Panc1 (cell line): ENCODE measurements at regions of chr7 and their contacts with region 1.

Region 1: GRCh38 chr7:55898287-55898686 is 11.0 kb downstream of the ZNF713 start:
- DNase-seq: no peak
- ATAC-seq: no peak
- H3K4me3 ChIP-seq: no peak overlapping the region
- H3K27ac ChIP-seq: no peak overlapping the region
- H3K4me1 ChIP-seq: no peaks in the 10 kb centered on the region
- H3K27me3 ChIP-seq: no peaks in the 10 kb centered on the region
- CTCF ChIP-seq: no peak

Region 2: GRCh38 chr7:55641273-55641691 is 257.0 kb before region 1 on chr7:
- CTCF ChIA-PET with region 1: no interaction called
- POLR2A ChIA-PET with region 1: no interaction called
- in situ Hi-C with region 1: no loop called
- intact Hi-C with region 1: no loop called
- DNase-seq: peak; percentile 72
- ATAC-seq: peak; percentile 98
- H3K4me3 ChIP-seq: no peak overlapping the region
- H3K27ac ChIP-seq: no peak overlapping the region
- H3K4me1 ChIP-seq: no peaks in the 10 kb centered on the region
- H3K27me3 ChIP-seq: no peaks in the 10 kb centered on the region; the same call in 1 of the 2 replicates
- CTCF ChIP-seq: peak; percentile 85

Region 3: DNA sequence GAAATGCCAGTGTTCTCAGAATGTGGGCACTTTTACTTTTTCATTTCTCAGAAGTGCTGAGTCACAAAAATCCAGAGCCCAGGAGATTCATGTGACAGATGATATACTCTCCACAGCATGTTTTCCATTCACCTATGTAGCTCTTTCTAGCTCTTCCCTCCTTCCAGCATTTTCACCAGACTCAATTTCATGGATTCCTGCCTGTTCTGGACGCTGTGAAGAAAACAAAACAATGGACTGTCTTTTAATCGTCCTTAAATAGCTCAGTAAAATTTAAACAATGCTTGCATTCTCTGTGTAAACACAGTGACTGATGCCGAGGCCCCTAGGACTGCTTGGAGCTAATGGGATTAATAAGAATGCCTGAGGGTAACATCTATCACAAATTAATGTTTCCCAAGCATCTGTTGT is 14.5 kb after region 1 on chr7:
- CTCF ChIA-PET with region 1: no interaction called
- POLR2A ChIA-PET with region 1: interaction called, 14 read pairs
- in situ Hi-C with region 1: no loop called
- intact Hi-C with region 1: no loop called
- DNase-seq: no peak
- ATAC-seq: no peak; the same call in 1 of the 2 replicates
- H3K4me3 ChIP-seq: no peak overlapping the region
- H3K27ac ChIP-seq: no peak overlapping the region
- H3K4me1 ChIP-seq: no peaks in the 10 kb centered on the region
- H3K27me3 ChIP-seq: no peaks in the 10 kb centered on the region
- CTCF ChIP-seq: no peak

Region 4: GRCh38 chr7:57274535-57275283 is 1376.4 kb after region 1 on chr7:
- CTCF ChIA-PET with region 1: no interaction called
- POLR2A ChIA-PET with region 1: no interaction called
- in situ Hi-C with region 1: no loop called
- intact Hi-C with region 1: no loop called
- DNase-seq: no peak
- ATAC-seq: no peak
- H3K4me3 ChIP-seq: no peak overlapping the region
- H3K27ac ChIP-seq: no peak overlapping the region
- H3K4me1 ChIP-seq: no peaks in the 10 kb centered on the region
- H3K27me3 ChIP-seq: no peaks in the 10 kb centered on the region
- CTCF ChIP-seq: no peak